ENCODE measurements at regions of chr18 and their contacts with region 1.

Region 1: GRCh38 chr18:62844850-62845643 is 129.7 kb downstream of the PHLPP1 start:
- DNase-seq: peak; percentile 72
- H3K4me3 Mint-ChIP-seq: peak overlapping the region; percentile 80
- H3K27ac Mint-ChIP-seq: peak overlapping the region; percentile 94
- H3K4me1 Mint-ChIP-seq: peaks cover 30% of the 10 kb centered on the region
- H3K27me3 Mint-ChIP-seq: no peaks in the 10 kb centered on the region

Region 2: GRCh38 chr18:62584241-62585120 is 260.6 kb before region 1 on chr18:
- intact Hi-C with region 1: loop called (anchors 5 kb)
- DNase-seq: peak; percentile 94
- H3K4me3 Mint-ChIP-seq: peak overlapping the region; percentile 59
- H3K27ac Mint-ChIP-seq: peak overlapping the region; percentile 82
- H3K4me1 Mint-ChIP-seq: peaks cover 40% of the 10 kb centered on the region
- H3K27me3 Mint-ChIP-seq: no peaks in the 10 kb centered on the region

Region 3: DNA sequence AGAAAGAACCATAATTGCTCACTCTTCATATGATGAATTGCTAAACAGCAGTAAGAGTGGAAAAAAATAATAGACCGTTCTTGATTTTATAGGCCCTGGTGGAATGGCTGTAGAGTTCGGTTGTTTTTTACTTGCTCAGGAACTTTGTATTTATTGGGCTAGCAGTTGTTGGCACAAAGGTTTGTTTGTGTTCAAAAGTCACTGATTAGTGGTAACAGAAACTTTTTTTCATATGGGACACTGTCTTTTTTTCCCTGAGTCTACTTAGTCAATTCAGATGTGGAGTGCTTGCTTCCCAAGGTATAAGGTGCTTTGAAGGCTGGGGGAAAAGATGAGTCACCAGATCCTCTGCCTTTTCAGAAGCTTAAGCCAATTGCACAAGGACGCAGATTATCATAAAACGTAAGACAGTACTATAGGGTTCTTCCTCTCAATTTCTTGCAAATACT is 103.9 kb before region 1 on chr18:
- intact Hi-C with region 1: no loop called
- DNase-seq: no peak
- H3K4me3 Mint-ChIP-seq: no peak overlapping the region
- H3K27ac Mint-ChIP-seq: peak overlapping the region; percentile 61
- H3K4me1 Mint-ChIP-seq: peaks cover 12% of the 10 kb centered on the region
- H3K27me3 Mint-ChIP-seq: no peaks in the 10 kb centered on the region

Region 4: DNA sequence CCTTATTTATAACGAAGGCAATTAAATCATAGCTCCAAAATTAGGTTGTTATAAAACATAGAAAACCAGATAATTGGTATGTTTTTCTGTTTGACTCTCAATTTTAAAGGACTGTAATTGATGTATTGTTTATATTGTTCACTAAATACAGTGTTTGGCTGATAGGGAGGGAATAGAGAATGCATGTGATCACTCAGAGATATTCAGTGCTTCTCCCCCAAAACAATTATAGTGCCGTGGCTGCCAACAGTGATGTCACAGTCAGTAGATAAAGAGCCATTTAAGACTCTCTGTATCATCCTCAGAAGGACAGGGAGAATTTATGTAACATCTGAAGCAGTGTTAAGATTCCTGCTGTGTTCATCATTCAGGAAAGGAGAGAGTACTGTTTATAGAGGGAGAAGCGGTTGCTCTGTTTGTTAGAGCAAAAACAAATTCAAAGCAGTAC is 60.1 kb before region 1 on chr18:
- intact Hi-C with region 1: loop called (anchors 1 kb)
- DNase-seq: no peak
- H3K4me3 Mint-ChIP-seq: peak overlapping the region; percentile 1
- H3K27ac Mint-ChIP-seq: peak overlapping the region; percentile 53
- H3K4me1 Mint-ChIP-seq: peaks cover 38% of the 10 kb centered on the region
- H3K27me3 Mint-ChIP-seq: peaks cover 3% of the 10 kb centered on the region

Region 5: DNA sequence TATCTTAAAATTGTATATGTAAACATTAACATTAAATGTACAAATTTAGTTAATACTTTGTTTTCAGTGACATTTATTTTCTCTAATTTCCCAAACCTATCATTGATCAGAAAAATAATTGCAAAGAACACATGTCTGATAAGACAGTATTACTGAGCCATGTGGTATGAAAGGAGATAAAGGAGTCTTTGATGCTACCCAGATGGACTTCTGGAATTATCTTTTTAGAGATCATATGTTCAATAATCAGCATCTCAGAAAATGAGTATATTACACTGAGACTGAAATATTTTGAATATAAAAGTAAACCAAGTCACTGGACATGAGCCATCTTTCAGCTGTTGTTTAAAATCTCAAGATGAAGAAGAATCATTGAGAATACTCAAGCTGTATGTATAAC is 23.6 kb after region 1 on chr18:
- intact Hi-C with region 1: loop called (anchors 1 kb)
- DNase-seq: no peak
- H3K4me3 Mint-ChIP-seq: no peak overlapping the region
- H3K27ac Mint-ChIP-seq: peak overlapping the region; percentile 92
- H3K4me1 Mint-ChIP-seq: peaks cover 17% of the 10 kb centered on the region
- H3K27me3 Mint-ChIP-seq: no peaks in the 10 kb centered on the region

Region 6: GRCh38 chr18:62881509-62882016 is 36.5 kb after region 1 on chr18:
- intact Hi-C with region 1: loop called (anchors 5 kb)
- DNase-seq: no peak
- H3K4me3 Mint-ChIP-seq: no peak overlapping the region
- H3K27ac Mint-ChIP-seq: no peak overlapping the region
- H3K4me1 Mint-ChIP-seq: peaks cover 18% of the 10 kb centered on the region
- H3K27me3 Mint-ChIP-seq: no peaks in the 10 kb centered on the region

Region 7: GRCh38 chr18:62957885-62958472 is 112.9 kb after region 1 on chr18:
- intact Hi-C with region 1: loop called (anchors 10 kb)
- DNase-seq: peak; percentile 89
- H3K4me3 Mint-ChIP-seq: no peak overlapping the region
- H3K27ac Mint-ChIP-seq: no peak overlapping the region
- H3K4me1 Mint-ChIP-seq: peaks cover 14% of the 10 kb centered on the region
- H3K27me3 Mint-ChIP-seq: no peaks in the 10 kb centered on the region

Region 8: GRCh38 chr18:62979009-62979575 is 134.0 kb after region 1 on chr18:
- intact Hi-C with region 1: no loop called
- DNase-seq: no peak
- H3K4me3 Mint-ChIP-seq: no peak overlapping the region
- H3K27ac Mint-ChIP-seq: no peak overlapping the region
- H3K4me1 Mint-ChIP-seq: peaks cover 6% of the 10 kb centered on the region
- H3K27me3 Mint-ChIP-seq: no peaks in the 10 kb centered on the region

Region 9: GRCh38 chr18:63949068-63949737 is 1104.2 kb after region 1 on chr18 and contains the start of gene HMSD:
- intact Hi-C with region 1: loop called (anchors 2 kb)
- DNase-seq: peak; percentile 90
- H3K4me3 Mint-ChIP-seq: peak within 1 kb of the TSS; percentile 88
- H3K27ac Mint-ChIP-seq: peak within 1 kb of the TSS; percentile 91
- H3K4me1 Mint-ChIP-seq: peaks cover 37% of the 10 kb centered on the region
- H3K27me3 Mint-ChIP-seq: peaks cover 15% of the 10 kb centered on the region
- total RNA-seq, gene HMSD: 16.8 and 25.0 TPM in 2 replicates